Right ventricle myocardium inferior (tissue), 1 donor: ENCODE measurements at regions of chr6 and their contacts with region 1.

Region 1: GRCh38 chr6:104771258-104771832 is 88.4 kb downstream of the HACE1 start:
- DNase-seq: no peak
- ATAC-seq: peak; percentile 37

Region 2: GRCh38 chr6:104525677-104526312 is 245.6 kb before region 1 on chr6:
- intact Hi-C with region 1: loop called (anchors 5 kb)
- DNase-seq: peak; percentile 84
- ATAC-seq: peak; percentile 89

Region 3: DNA sequence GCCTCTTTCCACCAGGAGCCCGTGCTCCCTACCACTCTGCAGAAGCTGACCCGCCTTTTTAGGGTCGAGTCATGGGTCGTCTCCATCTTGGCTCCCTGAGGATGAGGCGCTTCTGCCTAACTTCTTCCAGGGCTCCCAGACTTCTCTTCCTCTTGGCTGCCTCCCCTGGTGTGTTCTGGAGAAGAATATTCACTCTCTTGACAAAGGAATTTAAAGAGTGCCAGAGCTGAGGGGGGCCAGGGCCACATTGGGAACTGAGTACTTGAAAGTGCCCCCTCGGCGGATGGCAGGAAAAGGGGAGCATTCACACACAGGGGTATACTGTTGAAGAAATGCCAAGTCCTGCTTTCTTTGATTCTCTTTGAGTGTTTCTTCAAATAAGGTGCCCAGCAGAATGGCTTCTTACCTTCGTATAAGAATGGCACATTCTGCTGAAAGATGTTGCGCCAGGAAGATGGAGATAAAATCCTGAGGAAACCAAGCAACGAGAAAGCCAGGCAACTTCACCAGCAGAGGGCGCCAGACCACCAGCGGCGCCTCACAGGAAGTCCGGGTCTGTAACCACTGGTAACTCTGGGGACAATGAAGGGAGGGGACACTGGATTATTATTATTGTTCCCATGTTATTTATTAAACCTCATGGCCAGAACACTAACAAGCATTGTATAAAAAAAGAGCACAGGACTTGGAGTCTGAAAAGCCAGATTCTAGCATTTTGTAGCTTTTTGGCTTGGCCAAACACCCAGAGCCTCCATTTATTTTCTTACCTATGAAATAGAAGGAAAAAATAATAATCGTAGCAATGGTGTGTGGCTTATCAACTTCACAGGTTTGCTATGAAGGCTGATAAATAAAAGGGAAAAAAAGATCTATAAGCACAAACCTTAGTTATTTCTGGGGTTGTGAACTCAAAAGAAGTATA is 88.4 kb before region 1 on chr6:
- intact Hi-C with region 1: loop called (anchors 5 kb)
- DNase-seq: peak; percentile 80
- ATAC-seq: no peak

Region 4: DNA sequence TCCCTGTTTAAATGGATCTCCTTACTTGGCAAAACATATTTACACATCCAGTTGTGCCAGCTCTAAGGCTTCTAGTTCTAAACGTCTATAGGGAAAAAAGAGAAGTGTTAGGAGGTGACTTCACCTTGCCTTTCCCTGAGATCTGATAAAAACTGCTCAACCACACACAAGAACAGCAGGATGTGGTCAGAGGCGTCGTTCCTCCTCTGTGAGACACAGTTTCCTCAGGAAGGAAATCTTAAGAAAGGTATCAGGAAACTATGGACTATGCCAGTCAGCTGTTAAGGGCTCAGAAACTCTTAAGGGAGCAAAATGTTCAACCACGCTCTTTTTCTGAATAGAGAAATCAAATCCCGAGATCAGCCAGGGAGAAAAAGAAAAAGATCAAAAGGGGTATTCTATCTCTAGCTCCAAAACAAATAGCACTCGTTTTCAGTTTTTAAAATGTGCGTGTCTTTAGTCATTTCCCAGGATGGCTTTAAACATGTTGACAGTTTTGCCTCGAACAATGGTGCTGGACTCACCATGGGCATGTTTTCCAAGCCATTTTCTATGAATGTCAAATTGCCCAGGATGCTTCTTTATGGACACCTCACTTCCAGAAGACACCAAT is 66.1 kb before region 1 on chr6:
- intact Hi-C with region 1: loop called (anchors 10 kb)
- DNase-seq: no peak
- ATAC-seq: peak; percentile 68

Region 5: DNA sequence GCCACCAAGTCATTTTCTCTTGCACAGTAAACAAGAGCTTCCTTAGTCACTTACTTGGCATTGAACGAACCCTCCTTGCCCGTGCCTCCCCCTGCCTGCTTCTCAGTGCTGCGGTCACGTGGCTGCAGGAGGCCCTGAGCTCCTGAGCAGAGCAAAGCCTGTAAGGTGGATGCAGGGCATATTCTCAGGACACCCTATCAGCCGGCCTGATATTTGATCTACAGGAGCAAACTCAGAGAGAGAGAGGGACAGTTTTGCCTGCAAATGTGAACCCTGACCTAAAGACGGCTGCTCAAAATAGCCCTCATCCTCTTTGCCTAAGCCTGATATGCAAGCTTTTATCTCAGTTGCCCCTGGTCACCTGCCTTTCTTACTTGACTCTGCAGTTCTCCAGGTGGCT is 501.4 kb after region 1 on chr6:
- intact Hi-C with region 1: no loop called
- DNase-seq: no peak
- ATAC-seq: peak; percentile 75

Region 6: DNA sequence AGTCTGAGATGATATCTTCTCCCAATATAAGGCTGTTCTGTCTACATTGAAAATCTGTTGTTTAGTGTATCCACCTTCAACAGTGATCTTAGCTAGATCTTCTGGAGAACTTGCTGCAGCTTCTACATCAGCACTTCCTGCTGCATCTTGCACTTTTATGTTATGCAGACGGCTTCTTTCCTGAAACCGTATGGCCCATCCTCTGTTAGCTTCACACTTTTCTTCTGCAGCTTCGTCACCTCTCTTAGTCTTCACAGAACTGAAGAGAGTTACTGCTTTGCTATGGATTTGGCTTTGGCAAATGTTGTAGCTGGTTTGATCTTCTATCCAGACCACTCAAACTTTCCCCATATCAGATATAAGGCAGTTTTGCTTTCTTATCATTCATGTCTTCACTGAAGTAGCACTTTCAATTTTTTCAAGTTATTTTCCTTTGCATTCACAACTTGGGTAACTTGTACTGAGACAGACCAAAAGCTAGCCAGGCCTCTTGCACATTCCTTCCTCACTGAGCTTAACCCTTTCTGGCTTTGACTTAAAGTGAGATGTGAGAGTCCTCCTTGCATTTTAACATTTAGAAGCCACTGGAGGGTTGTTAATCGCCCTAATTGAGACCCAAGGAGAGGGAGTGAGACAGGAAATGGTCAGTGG is 521.5 kb after region 1 on chr6:
- intact Hi-C with region 1: no loop called
- DNase-seq: no peak
- ATAC-seq: no peak